ENCODE measurements at regions of chr3 and their contacts with region 1.

Region 1: DNA sequence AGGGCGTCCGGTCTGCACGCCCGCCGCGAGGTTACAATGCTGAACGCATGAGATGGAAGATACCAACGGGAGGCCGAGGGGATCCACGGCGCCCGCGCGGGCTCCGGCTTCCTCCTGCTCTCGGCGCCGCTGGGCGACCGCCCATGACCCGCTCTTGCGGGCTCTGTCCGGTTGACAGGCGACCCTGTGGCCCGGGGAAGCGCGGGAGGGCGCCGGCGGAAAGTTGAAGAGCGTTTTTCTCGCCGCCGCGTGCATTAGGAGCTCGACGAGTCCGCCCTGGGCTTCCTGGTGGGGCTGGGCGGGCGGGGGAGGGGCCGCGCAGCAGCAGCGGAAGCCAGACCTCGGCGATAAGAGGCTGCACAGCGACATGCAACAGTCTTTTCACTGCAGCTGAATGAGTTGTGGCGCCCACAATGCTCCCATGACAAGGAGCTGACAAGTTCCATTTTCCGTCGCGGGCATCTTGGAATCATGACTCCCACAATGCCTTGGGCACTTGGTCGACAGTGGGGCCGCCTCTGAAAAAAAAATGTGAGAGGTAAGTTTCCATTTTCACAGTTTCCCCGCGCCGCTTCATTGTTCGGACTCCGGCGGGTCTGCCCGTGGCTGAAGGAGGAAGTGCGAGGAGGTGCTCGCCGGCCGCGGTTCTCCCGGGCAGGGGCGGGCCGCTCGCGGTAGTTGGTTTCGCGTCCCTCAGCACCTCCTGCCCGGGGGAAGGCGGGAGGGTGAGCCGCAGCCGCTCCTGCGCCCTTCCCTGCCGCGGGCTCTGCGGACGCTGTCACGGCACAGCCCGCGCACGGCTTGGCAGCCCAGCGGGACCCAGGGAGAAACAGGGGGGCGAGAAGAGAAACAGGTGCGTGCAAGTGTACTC is at the start of gene MBNL1:
- DNase-seq: peak; percentile 70
- ATAC-seq: peak; percentile 52
- H3K4me3 ChIP-seq: peak within 1 kb of the TSS; percentile 88
- H3K27ac ChIP-seq: peak within 1 kb of the TSS; percentile 99
- H3K4me1 ChIP-seq: peaks cover 6% of the 10 kb centered on the region
- H3K27me3 ChIP-seq: no peaks in the 10 kb centered on the region
- CTCF ChIP-seq: no peak
- POLR2A ChIP-seq: peak; percentile 84
- RAD21 ChIP-seq: 0 out of 2 replicates have a peak, but pooled peaks have one; percentile 11
- total RNA-seq, gene MBNL1: 515 and 664 TPM in 2 replicates

Region 2: GRCh38 chr3:151925876-151926275 is 342.9 kb before region 1 on chr3:
- CTCF ChIA-PET with region 1: no interaction called
- POLR2A ChIA-PET with region 1: no interaction called
- dilution Hi-C with region 1: no loop called
- in situ Hi-C with region 1: no loop called
- intact Hi-C with region 1: loop called (anchors 2 kb)
- DNase-seq: peak; percentile 83
- ATAC-seq: peak; percentile 95
- H3K4me3 ChIP-seq: no peak overlapping the region
- H3K27ac ChIP-seq: no peak overlapping the region
- H3K4me1 ChIP-seq: peaks cover 12% of the 10 kb centered on the region
- H3K27me3 ChIP-seq: no peaks in the 10 kb centered on the region
- CTCF ChIP-seq: no peak
- POLR2A ChIP-seq: no peak
- RAD21 ChIP-seq: no peak

Region 3: DNA sequence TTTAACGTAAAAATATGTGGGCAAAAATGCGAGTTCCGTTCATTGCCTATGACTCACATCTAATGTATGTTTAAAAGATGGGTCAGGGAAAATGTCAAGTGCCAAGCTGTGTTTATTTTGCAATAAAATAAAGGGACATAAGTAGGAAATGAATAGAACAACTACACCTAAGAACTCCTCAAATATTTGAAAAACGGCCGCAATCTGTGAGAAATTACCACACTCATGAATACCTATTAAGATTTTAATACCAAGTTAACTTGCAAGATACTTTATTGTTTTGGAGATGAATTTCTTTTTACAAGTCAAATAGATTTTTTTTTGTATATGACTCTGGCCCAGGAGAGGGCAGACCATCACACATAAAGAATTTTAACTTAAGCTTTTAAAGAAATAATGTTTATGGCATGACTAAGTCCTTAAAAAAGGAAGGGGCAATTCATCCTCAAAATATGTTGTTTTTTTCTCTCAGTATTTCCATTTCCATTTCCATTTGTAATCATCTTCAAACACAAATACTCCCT is 242.7 kb before region 1 on chr3:
- CTCF ChIA-PET with region 1: no interaction called
- POLR2A ChIA-PET with region 1: no interaction called
- dilution Hi-C with region 1: no loop called
- in situ Hi-C with region 1: no loop called
- intact Hi-C with region 1: loop called (anchors 1 kb)
- DNase-seq: peak; percentile 89
- ATAC-seq: peak; percentile 89
- H3K4me3 ChIP-seq: no peak overlapping the region
- H3K27ac ChIP-seq: peak overlapping the region; percentile 80; the same call in 1 of the 2 replicates
- H3K4me1 ChIP-seq: no peaks in the 10 kb centered on the region
- H3K27me3 ChIP-seq: no peaks in the 10 kb centered on the region
- CTCF ChIP-seq: peak; percentile 63
- POLR2A ChIP-seq: no peak
- RAD21 ChIP-seq: peak; percentile 62

Region 4: DNA sequence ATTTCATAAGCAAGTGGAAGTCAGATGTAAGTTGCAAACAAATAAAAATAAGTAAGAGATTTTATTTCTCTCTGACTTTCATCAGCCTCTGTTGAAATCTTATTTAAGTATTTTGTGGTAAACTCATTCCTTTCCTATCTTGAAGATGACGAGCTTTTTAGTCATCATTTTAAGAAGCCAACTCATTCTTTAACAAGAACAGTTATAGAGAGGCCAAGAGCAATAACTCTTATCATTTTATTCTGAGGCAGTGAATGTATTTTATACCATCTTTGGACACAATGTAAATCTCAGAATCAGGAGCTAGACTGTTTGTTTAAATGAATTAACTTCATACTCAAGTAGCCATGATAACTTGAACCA is 147.5 kb before region 1 on chr3:
- CTCF ChIA-PET with region 1: no interaction called
- POLR2A ChIA-PET with region 1: interaction called, 7 read pairs
- dilution Hi-C with region 1: no loop called
- in situ Hi-C with region 1: no loop called
- intact Hi-C with region 1: loop called (anchors 1 kb)
- DNase-seq: peak; percentile 95
- ATAC-seq: peak; percentile 77
- H3K4me3 ChIP-seq: no peak overlapping the region; the same call in 1 of the 2 replicates
- H3K27ac ChIP-seq: peak overlapping the region; percentile 88
- H3K4me1 ChIP-seq: peaks cover 10% of the 10 kb centered on the region; the same call in 1 of the 2 replicates
- H3K27me3 ChIP-seq: no peaks in the 10 kb centered on the region
- CTCF ChIP-seq: no peak
- POLR2A ChIP-seq: no peak
- RAD21 ChIP-seq: no peak

Region 5: DNA sequence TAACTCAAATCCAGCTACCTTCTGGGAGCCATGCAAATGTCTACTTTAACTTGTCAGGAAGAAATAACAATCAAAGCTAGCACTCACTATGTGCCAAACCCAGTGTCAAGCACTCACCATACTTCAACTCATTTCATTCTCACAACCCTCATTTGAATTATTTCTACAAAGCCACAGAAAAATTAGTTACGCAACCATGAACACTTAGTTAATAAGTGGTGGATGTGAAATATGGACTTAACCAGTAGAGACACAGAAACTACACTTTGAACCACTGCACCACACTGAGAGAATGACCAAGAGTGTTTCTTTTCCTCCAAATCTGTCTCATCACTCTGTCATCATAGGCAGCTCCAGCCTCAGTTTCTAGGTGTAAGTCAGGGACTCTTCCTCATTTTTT is 91.0 kb before region 1 on chr3:
- CTCF ChIA-PET with region 1: no interaction called
- POLR2A ChIA-PET with region 1: no interaction called
- dilution Hi-C with region 1: no loop called
- in situ Hi-C with region 1: no loop called
- intact Hi-C with region 1: loop called (anchors 5 kb)
- DNase-seq: no peak
- ATAC-seq: no peak
- H3K4me3 ChIP-seq: no peak overlapping the region
- H3K27ac ChIP-seq: no peak overlapping the region; the same call in 1 of the 2 replicates
- H3K4me1 ChIP-seq: peaks cover 13% of the 10 kb centered on the region; the same call in 1 of the 2 replicates
- H3K27me3 ChIP-seq: no peaks in the 10 kb centered on the region
- CTCF ChIP-seq: no peak
- POLR2A ChIP-seq: no peak
- RAD21 ChIP-seq: no peak

Region 6: GRCh38 chr3:152385761-152386160 is 117.0 kb after region 1 on chr3:
- CTCF ChIA-PET with region 1: no interaction called
- POLR2A ChIA-PET with region 1: no interaction called
- dilution Hi-C with region 1: no loop called
- in situ Hi-C with region 1: no loop called
- intact Hi-C with region 1: loop called (anchors 5 kb)
- DNase-seq: peak; percentile 85
- ATAC-seq: peak; percentile 79
- H3K4me3 ChIP-seq: no peak overlapping the region
- H3K27ac ChIP-seq: no peak overlapping the region
- H3K4me1 ChIP-seq: peaks cover 9% of the 10 kb centered on the region
- H3K27me3 ChIP-seq: no peaks in the 10 kb centered on the region
- CTCF ChIP-seq: no peak
- POLR2A ChIP-seq: no peak
- RAD21 ChIP-seq: no peak

Region 7: DNA sequence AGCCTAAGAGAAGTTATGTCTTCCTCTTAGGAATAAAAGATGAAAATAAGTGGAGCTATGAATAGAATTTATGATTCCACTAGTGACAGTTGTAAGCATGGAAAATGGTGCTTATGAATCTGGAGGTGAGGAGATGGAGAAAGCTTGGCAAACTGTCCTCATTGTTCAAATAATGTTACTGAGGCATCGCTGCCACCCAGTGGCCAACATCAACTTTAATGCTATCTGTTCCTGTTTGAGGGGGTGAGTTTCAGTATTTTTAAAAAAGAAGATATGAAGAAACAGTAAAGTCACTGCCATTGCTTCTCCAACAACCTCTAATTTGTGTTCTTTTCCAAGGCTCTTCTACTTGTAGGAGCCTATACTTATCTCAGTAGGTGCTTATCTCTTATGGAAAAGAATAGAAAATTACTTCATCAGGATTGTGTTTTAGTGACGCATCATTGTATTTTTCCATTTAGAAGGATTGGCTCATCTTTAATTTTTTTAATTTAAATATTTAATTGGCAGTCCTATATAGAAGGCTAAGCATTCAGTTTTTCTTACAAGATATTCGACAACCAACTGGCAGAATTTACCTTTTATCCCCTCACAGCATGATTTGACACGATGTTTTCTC is 305.8 kb after region 1 on chr3:
- CTCF ChIA-PET with region 1: no interaction called
- POLR2A ChIA-PET with region 1: no interaction called
- dilution Hi-C with region 1: no loop called
- in situ Hi-C with region 1: no loop called
- intact Hi-C with region 1: loop called (anchors 10 kb)
- DNase-seq: peak; percentile 51
- ATAC-seq: peak; percentile 85
- H3K4me3 ChIP-seq: no peak overlapping the region
- H3K27ac ChIP-seq: no peak overlapping the region
- H3K4me1 ChIP-seq: no peaks in the 10 kb centered on the region
- H3K27me3 ChIP-seq: peaks cover 3% of the 10 kb centered on the region; the same call in 1 of the 2 replicates
- CTCF ChIP-seq: peak; percentile 56
- POLR2A ChIP-seq: no peak
- RAD21 ChIP-seq: peak; percentile 67